ENCODE measurements at regions of chr12 and their contacts with region 1.

Region 1: DNA sequence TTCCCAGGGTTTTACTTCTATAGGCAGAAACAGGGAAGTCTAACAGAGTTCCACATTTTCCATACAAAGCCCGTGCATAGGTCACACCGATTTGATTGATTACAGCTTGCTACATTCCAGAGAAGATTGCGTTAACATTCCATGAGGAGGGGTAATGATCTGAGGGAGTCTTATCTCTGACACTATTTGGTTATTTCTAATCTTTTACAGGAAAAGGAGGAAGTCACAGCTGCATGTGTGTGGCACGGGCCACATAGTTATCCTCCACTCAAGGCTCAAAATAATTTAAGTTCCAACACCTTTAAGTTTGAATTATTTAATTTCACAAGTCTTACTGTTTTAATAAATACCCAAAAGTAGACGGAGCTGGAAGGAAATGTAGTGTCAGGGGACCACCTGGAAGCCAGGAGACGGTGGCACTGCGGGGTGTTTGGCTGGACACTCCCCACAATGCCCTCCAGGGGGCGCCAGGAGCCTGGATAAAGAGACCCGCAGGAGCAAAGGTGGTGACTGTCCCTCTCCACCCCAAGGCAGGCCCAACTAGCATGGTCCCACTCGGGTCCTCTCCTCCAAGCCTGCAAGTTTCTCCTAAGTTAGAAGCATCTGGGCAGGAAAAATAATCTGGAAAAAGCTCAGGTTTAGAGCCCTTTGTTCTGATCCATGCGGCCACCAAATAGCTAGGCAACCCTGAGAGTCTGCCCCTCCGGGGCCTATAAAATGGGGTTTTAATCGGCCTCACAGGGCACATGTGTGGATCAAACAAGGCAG is 20.2 kb downstream of the KRT8 start:
- DNase-seq: peak; percentile 77
- H3K4me3 Mint-ChIP-seq: no peak overlapping the region
- H3K27ac Mint-ChIP-seq: no peak overlapping the region
- H3K4me1 Mint-ChIP-seq: peaks cover 4% of the 10 kb centered on the region
- H3K27me3 Mint-ChIP-seq: no peaks in the 10 kb centered on the region
- CTCF ChIP-seq: peak; percentile 93

Region 2: GRCh38 chr12:52139552-52140062 is 745.1 kb before region 1 on chr12:
- CTCF ChIA-PET with region 1: interaction called, 313 read pairs
- POLR2A ChIA-PET with region 1: interaction called, 142 read pairs
- intact Hi-C with region 1: loop called (anchors 1 kb)
- DNase-seq: peak; percentile 75
- H3K4me3 Mint-ChIP-seq: no peak overlapping the region
- H3K27ac Mint-ChIP-seq: no peak overlapping the region
- H3K4me1 Mint-ChIP-seq: peaks cover 25% of the 10 kb centered on the region
- H3K27me3 Mint-ChIP-seq: no peaks in the 10 kb centered on the region
- CTCF ChIP-seq: peak; percentile 97

Region 3: GRCh38 chr12:52229546-52230326 is 655.0 kb before region 1 on chr12:
- CTCF ChIA-PET with region 1: no interaction called
- POLR2A ChIA-PET with region 1: no interaction called
- intact Hi-C with region 1: no loop called
- DNase-seq: peak; percentile 0
- H3K4me3 Mint-ChIP-seq: no peak overlapping the region
- H3K27ac Mint-ChIP-seq: peak overlapping the region; percentile 91
- H3K4me1 Mint-ChIP-seq: peaks cover 47% of the 10 kb centered on the region
- H3K27me3 Mint-ChIP-seq: no peaks in the 10 kb centered on the region
- CTCF ChIP-seq: no peak

Region 4: DNA sequence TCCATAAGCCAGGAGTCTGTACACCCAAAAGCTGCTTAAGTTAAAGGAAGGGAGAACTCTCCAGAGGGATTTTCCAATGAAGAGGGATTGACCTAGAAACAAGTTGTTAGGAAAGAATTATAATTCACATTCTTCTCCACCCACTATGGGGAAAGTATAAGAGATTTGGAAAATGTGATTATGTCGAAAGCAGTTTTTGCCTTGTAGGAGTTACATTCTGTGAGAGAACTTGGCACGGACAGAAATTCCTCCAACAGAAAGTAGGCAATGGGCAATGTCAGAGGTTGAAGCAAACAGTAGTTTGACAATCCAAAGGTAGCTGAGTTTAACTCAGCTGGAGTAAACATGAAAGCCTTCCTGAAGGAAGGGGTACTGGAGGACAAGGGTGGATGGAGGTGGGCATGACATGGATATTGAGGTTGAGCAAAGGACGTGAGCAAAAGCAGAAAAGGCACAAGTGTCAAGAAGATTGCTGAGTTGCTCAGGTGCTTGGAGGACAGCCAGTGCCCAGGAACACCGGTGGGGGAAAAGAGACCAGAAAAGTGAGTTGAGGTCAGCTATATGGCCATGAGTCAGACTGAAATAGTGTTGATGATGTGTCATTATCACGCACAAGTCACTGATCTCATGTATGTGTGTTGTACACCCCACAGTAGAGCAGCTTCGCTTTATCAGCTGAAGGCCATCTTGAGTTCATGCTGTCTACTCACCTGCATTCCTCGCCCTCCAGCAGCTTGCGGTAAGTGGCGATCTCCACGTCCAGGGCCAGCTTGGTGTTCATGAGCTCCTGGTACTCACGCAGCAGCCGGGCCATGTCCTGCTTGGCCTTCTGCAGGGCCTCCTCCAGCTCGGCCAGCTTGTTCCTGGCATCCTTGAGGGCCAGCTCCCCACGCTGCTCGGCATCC is 368.5 kb before region 1 on chr12:
- CTCF ChIA-PET with region 1: interaction called, 77 read pairs
- POLR2A ChIA-PET with region 1: interaction called, 675 read pairs
- intact Hi-C with region 1: no loop called
- DNase-seq: peak; percentile 43
- H3K4me3 Mint-ChIP-seq: peak overlapping the region; percentile 80
- H3K27ac Mint-ChIP-seq: peak overlapping the region; percentile 12
- H3K4me1 Mint-ChIP-seq: peaks cover 30% of the 10 kb centered on the region
- H3K27me3 Mint-ChIP-seq: no peaks in the 10 kb centered on the region
- CTCF ChIP-seq: no peak

Region 5: GRCh38 chr12:52774629-52775250 is 110.0 kb before region 1 on chr12:
- CTCF ChIA-PET with region 1: no interaction called
- POLR2A ChIA-PET with region 1: no interaction called
- intact Hi-C with region 1: no loop called
- DNase-seq: no peak
- H3K4me3 Mint-ChIP-seq: no peak overlapping the region
- H3K27ac Mint-ChIP-seq: no peak overlapping the region
- H3K4me1 Mint-ChIP-seq: no peaks in the 10 kb centered on the region
- H3K27me3 Mint-ChIP-seq: peaks cover 78% of the 10 kb centered on the region
- CTCF ChIP-seq: no peak

Region 6: GRCh38 chr12:52895061-52895887 is 10.6 kb after region 1 on chr12:
- CTCF ChIA-PET with region 1: interaction called, 107 read pairs
- POLR2A ChIA-PET with region 1: no interaction called
- intact Hi-C with region 1: no loop called
- DNase-seq: peak; percentile 53
- H3K4me3 Mint-ChIP-seq: no peak overlapping the region
- H3K27ac Mint-ChIP-seq: peak overlapping the region; percentile 35
- H3K4me1 Mint-ChIP-seq: peaks cover 12% of the 10 kb centered on the region
- H3K27me3 Mint-ChIP-seq: no peaks in the 10 kb centered on the region
- CTCF ChIP-seq: no peak

Region 7: DNA sequence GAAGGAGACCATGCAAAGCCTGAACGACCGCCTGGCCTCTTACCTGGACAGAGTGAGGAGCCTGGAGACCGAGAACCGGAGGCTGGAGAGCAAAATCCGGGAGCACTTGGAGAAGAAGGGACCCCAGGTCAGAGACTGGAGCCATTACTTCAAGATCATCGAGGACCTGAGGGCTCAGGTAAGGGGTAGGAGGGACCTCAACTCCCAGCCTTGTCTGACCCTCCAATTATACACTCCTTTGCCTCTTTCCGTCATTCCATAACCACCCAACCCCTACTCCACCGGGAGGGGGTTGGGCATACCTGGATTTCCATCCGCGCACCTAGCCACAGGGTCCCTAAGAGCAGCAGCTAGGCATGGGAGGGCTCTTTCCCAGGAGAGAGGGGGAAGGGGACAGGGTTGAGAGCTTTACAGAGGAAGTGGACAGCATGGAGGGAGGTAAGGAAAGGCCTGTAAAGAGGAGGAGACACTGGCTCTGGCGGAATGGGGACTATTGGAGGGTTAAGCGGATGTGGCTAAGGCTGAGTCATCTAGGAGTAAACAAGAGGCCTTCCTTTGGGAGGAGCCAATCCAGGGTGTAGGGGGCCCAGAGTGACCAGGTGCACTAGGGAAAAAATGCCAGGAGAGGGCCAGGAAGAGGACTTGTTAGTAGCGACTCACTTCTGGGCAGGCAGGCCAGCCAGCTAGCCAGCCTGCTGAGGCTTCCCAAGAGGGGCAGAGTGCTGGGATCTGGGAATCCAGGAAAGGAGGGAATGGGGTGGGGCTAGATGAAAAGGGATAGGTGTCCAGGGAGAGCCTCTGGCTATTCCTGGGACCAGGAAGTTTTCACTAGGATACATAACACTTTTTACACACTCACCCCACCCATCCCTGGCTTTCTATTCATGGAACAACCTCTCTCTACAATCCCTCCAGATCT is 65.0 kb after region 1 on chr12:
- CTCF ChIA-PET with region 1: interaction called, 28 read pairs
- POLR2A ChIA-PET with region 1: interaction called, 4 read pairs
- intact Hi-C with region 1: loop called (anchors 1 kb)
- DNase-seq: peak; percentile 98
- H3K4me3 Mint-ChIP-seq: peak overlapping the region; percentile 95
- H3K27ac Mint-ChIP-seq: peak overlapping the region; percentile 86
- H3K4me1 Mint-ChIP-seq: peaks cover 57% of the 10 kb centered on the region
- H3K27me3 Mint-ChIP-seq: no peaks in the 10 kb centered on the region
- CTCF ChIP-seq: no peak

Region 8: GRCh38 chr12:52992699-52993557 is 108.2 kb after region 1 on chr12:
- CTCF ChIA-PET with region 1: interaction called, 747 read pairs
- POLR2A ChIA-PET with region 1: no interaction called
- intact Hi-C with region 1: no loop called
- DNase-seq: peak; percentile 43
- H3K4me3 Mint-ChIP-seq: no peak overlapping the region
- H3K27ac Mint-ChIP-seq: no peak overlapping the region
- H3K4me1 Mint-ChIP-seq: peaks cover 8% of the 10 kb centered on the region
- H3K27me3 Mint-ChIP-seq: no peaks in the 10 kb centered on the region
- CTCF ChIP-seq: no peak